ENCODE measurements at regions of chr1 and their contacts with region 1.

Region 1: GRCh38 chr1:32521165-32521564 is 18.1 kb upstream of the ZBTB8A start:
- DNase-seq: no peak
- H3K4me3 ChIP-seq: no peak overlapping the region
- H3K27ac ChIP-seq: no peak overlapping the region
- H3K4me1 ChIP-seq: no peaks in the 10 kb centered on the region
- H3K27me3 ChIP-seq: no peaks in the 10 kb centered on the region
- CTCF ChIP-seq: no peak

Region 2: DNA sequence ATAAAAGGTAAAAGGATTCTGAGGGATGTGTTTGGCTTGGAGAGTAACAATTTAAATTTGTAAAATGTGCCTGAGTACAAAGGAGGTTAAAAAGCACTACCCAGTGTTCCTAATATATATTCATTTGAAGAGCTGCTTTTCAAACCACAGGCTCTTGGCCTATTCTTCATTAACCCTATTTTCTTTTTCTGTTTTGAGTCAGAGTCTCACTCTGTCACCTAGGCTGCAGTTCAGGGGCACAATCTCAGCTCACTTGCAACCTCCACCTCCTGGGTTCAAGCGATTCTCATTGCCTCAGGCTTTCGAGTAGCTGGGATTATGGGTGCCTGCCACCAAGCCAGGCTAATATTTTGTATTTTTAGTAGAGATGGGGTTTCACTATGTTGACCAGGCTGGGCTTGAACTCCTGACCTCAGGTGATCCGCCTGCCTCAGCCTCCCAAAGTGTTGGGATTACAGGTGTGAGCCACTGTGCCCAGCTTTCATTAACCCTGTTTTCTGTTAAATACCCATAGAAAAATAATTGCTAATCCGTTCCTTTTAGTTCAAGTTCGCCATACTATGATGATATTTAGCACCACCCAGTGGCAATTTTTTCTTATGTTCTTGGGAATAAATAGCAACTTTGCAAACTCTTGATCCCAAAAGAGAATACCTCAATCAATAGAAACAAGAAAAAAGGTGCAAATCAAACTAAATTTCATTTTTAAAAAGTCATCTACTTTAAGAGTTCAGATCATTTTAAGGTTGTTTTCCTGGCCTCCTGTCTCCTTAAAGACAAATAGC is 98.7 kb after region 1 on chr1:
- intact Hi-C with region 1: loop called (anchors 10 kb)
- DNase-seq: no peak
- H3K4me3 ChIP-seq: no peak overlapping the region
- H3K27ac ChIP-seq: no peak overlapping the region
- H3K4me1 ChIP-seq: no peaks in the 10 kb centered on the region
- H3K27me3 ChIP-seq: no peaks in the 10 kb centered on the region
- CTCF ChIP-seq: no peak

Region 3: GRCh38 chr1:32773018-32773763 is 252.0 kb after region 1 on chr1:
- intact Hi-C with region 1: loop called (anchors 10 kb)
- DNase-seq: peak; percentile 84 to 87
- H3K4me3 ChIP-seq: no peak overlapping the region
- H3K27ac ChIP-seq: no peak overlapping the region
- H3K4me1 ChIP-seq: peaks cover 0 to 20% (median 4%) of the 10 kb centered on the region in 4 donors
- H3K27me3 ChIP-seq: no peaks in the 10 kb centered on the region
- CTCF ChIP-seq: peak; percentile 91 to 94